ENCODE measurements at regions of chr2 and their contacts with region 1.

Region 1: GRCh38 chr2:218852911-218853667 is 6.5 kb upstream of the WNT6 start:
- DNase-seq: peak; percentile 21 to 60 (median 56)
- ATAC-seq: peak; percentile 87
- H3K4me3 ChIP-seq: no peak overlapping the region
- H3K4me3 Mint-ChIP-seq: no peak overlapping the region
- H3K27ac ChIP-seq: no peak overlapping the region
- H3K27ac Mint-ChIP-seq: peak overlapping the region in 1 of 9 donors; percentile 24
- H3K4me1 ChIP-seq: no peaks in the 10 kb centered on the region
- H3K4me1 Mint-ChIP-seq: peaks cover 0 to 10% (median under 1%) of the 10 kb centered on the region in 7 donors
- H3K27me3 ChIP-seq: peaks cover 9% of the 10 kb centered on the region in 2 donors
- H3K27me3 Mint-ChIP-seq: peaks cover 59 to 71% (median 65%) of the 10 kb centered on the region in 5 donors

Region 2: GRCh38 chr2:218186355-218186766 is 666.7 kb before region 1 on chr2:
- CTCF ChIA-PET with region 1: no interaction called
- POLR2A ChIA-PET with region 1: no interaction called
- intact Hi-C with region 1: loop called in 1 of 2 experiments (anchors 5 kb)
- DNase-seq: peak; percentile 29 to 79 (median 70)
- ATAC-seq: peak; percentile 97
- H3K4me3 ChIP-seq: no peak overlapping the region
- H3K4me3 Mint-ChIP-seq: no peak overlapping the region
- H3K27ac ChIP-seq: no peak overlapping the region
- H3K27ac Mint-ChIP-seq: peak overlapping the region in 1 of 9 donors; percentile 3
- H3K4me1 ChIP-seq: no peaks in the 10 kb centered on the region
- H3K4me1 Mint-ChIP-seq: peaks cover 0 to 14% (median 8%) of the 10 kb centered on the region in 7 donors
- H3K27me3 ChIP-seq: no peaks in the 10 kb centered on the region
- H3K27me3 Mint-ChIP-seq: peaks cover 0 to 24% (median 0%) of the 10 kb centered on the region in 5 donors

Region 3: DNA sequence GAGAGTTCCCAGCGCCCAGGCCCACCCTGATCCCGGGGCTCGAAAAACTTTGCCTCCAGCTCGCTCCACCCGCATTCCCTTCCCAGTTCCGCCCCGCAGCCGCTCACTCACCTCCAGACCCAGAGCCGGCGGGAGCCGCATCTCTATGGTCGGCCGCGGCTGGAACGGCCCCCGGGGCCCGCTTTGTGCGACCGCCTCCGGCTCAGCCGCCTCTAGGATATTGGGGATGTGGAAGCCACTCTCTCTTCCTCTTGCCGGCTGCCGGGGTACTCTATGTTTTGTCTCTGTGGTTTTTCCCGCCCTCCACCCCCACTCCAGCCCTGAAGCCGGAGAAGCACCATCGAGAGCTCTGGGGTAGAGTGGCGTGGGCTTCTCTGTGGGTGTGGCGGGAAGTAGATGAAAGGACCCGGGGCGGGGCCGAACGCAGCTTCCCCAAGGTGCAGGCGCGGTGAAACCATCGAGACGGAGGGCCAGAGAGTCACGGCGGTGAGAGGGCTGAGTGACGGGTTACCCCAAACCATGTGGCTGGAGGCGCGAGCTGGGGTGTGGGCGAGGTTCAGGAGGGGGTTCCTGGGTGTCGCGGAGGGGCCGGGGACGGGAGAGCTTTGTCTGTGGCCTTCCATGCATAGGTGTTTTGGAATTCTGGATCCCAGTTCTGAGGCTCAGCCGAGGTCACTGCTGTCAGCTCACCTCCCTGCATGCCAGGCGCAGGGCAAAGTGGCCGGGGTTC is 193.7 kb before region 1 on chr2 and contains the starts of genes BCS1L and ZNF142:
- CTCF ChIA-PET with region 1: no interaction called
- POLR2A ChIA-PET with region 1: no interaction called
- intact Hi-C with region 1: no loop called
- DNase-seq: peak; percentile 75 to 95 (median 90)
- ATAC-seq: peak; percentile 99
- H3K4me3 ChIP-seq: peak within 1 kb of the TSS; percentile 83
- H3K4me3 Mint-ChIP-seq: peak within 1 kb of the TSS; percentile 90 to 99 (median 98)
- H3K27ac ChIP-seq: peak within 1 kb of the TSS; percentile 80
- H3K27ac Mint-ChIP-seq: peak within 1 kb of the TSS; percentile 74 to 96 (median 93)
- H3K4me1 ChIP-seq: peaks cover 7 to 15% of the 10 kb centered on the region in 2 donors
- H3K4me1 Mint-ChIP-seq: peaks cover 25 to 45% (median 38%) of the 10 kb centered on the region in 7 donors
- H3K27me3 ChIP-seq: no peaks in the 10 kb centered on the region
- H3K27me3 Mint-ChIP-seq: no peaks in the 10 kb centered on the region
- total RNA-seq, gene BCS1L: 21.4 to 62.0 (median 49.0) TPM
- total RNA-seq, gene ZNF142: 38.7 to 49.8 (median 40.8) TPM

Region 4: DNA sequence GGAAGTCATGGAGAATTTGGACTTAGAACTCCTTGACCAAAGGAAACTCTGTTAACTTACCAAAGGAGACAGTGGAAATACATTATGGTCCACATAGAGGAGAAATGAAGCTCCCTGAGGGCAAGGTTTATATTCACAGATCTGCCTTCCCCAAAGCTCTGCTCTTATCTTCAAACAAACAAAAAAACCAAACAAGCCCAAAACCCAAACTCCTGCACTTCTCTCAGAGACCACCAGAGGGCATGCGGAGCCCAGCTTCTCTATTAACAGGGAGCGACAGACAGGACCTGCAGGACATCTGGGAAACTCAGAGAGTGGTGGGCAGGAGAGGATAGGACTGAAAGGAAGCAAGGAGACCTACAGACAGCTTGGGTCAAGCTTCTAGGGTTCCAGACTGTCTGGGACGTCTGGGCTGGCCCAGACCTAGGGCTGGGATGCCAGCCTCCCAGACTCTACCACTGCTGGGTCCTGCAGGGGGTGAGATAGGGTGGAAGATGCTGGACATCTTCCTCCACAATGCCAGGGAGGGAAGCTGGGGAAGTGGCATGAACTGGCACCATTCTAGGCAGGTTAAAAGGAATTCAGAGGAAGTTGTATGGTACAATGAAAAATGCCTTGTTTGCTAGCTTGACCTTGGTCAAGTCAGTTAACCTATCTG is 23.6 kb after region 1 on chr2:
- CTCF ChIA-PET with region 1: interaction called, 6 read pairs
- POLR2A ChIA-PET with region 1: no interaction called
- intact Hi-C with region 1: loop called in 1 of 2 experiments (anchors 1 kb)
- DNase-seq: peak in 8 of 9 donors; percentile 53 to 85 (median 74)
- ATAC-seq: peak; percentile 24
- H3K4me3 ChIP-seq: no peak overlapping the region
- H3K4me3 Mint-ChIP-seq: peak overlapping the region in 3 of 10 donors; percentile 1 to 19 (median 3)
- H3K27ac ChIP-seq: no peak overlapping the region
- H3K27ac Mint-ChIP-seq: peak overlapping the region in 3 of 9 donors; percentile 48 to 53 (median 52)
- H3K4me1 ChIP-seq: peaks cover 26 to 42% of the 10 kb centered on the region in 2 donors
- H3K4me1 Mint-ChIP-seq: peaks cover 24 to 53% (median 43%) of the 10 kb centered on the region in 7 donors
- H3K27me3 ChIP-seq: peaks cover 8 to 18% of the 10 kb centered on the region in 2 donors
- H3K27me3 Mint-ChIP-seq: peaks cover 18 to 77% (median 29%) of the 10 kb centered on the region in 5 donors

Region 5: DNA sequence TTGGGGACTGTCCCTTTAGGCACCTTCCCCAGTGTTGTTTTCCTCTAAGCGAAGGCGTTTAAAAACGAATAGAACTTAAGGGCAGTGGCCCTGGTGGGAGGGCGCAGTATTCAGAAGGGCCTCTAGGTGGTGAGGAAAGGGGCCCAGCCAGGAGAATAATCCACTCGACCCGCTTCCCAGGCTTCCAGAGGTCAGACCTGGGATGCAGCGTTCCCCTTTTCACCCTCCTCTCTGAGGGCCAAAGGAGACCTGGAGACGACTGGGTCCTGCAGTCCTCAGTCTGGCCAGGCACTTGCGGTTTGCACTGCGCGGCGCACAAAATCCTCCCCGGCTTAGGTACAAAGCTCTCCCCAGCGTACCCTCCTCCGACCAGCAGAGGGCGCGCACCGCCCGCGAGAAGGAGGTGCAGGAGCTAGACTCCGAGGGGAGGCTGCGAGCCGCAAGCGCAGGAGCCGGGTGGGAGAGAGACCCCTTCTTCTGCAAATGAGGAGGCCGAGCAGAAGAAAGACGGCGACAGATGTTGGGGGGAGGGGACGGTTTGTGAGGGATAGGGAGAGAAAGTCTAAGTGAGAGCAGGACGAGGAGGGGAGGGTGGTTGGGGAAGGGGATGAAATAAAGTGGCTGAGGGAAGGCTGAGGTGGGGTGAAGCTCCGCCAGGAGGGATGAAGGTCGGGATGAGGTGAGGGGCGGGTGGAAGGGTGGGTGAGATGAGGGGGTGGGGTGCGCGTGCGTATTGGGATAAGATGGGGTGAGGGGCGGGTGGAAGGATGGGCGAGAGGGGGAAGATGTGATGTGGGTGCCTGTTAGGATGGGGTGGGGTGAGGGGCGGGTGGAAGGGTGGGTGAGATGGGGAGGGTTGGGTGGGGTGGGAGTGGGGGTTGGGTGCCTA is 127.0 kb after region 1 on chr2:
- CTCF ChIA-PET with region 1: interaction called, 4 read pairs
- POLR2A ChIA-PET with region 1: no interaction called
- intact Hi-C with region 1: loop called (anchors 1 kb)
- DNase-seq: peak; percentile 65 to 85 (median 81)
- ATAC-seq: peak; percentile 93
- H3K4me3 ChIP-seq: peak overlapping the region; percentile 53
- H3K4me3 Mint-ChIP-seq: peak overlapping the region; percentile 66 to 94 (median 73)
- H3K27ac ChIP-seq: no peak overlapping the region
- H3K27ac Mint-ChIP-seq: peak overlapping the region in 1 of 9 donors; percentile 58
- H3K4me1 ChIP-seq: peaks cover 13 to 23% of the 10 kb centered on the region in 2 donors
- H3K4me1 Mint-ChIP-seq: peaks cover 14 to 40% (median 20%) of the 10 kb centered on the region in 7 donors
- H3K27me3 ChIP-seq: peaks cover 17 to 35% of the 10 kb centered on the region in 2 donors
- H3K27me3 Mint-ChIP-seq: peaks cover 60 to 80% (median 70%) of the 10 kb centered on the region in 5 donors

Region 6: GRCh38 chr2:219029829-219030165 is 176.7 kb after region 1 on chr2:
- CTCF ChIA-PET with region 1: no interaction called
- POLR2A ChIA-PET with region 1: no interaction called
- intact Hi-C with region 1: loop called in 1 of 2 experiments (anchors 1 kb)
- DNase-seq: peak; percentile 60 to 79 (median 71)
- ATAC-seq: peak; percentile 90
- H3K4me3 ChIP-seq: no peak overlapping the region
- H3K4me3 Mint-ChIP-seq: no peak overlapping the region
- H3K27ac ChIP-seq: no peak overlapping the region
- H3K27ac Mint-ChIP-seq: peak overlapping the region in 1 of 9 donors; percentile 14
- H3K4me1 ChIP-seq: no peaks in the 10 kb centered on the region
- H3K4me1 Mint-ChIP-seq: no peaks in the 10 kb centered on the region
- H3K27me3 ChIP-seq: peaks cover 0 to 3% of the 10 kb centered on the region in 2 donors
- H3K27me3 Mint-ChIP-seq: peaks cover 21 to 41% (median 28%) of the 10 kb centered on the region in 5 donors

Region 7: DNA sequence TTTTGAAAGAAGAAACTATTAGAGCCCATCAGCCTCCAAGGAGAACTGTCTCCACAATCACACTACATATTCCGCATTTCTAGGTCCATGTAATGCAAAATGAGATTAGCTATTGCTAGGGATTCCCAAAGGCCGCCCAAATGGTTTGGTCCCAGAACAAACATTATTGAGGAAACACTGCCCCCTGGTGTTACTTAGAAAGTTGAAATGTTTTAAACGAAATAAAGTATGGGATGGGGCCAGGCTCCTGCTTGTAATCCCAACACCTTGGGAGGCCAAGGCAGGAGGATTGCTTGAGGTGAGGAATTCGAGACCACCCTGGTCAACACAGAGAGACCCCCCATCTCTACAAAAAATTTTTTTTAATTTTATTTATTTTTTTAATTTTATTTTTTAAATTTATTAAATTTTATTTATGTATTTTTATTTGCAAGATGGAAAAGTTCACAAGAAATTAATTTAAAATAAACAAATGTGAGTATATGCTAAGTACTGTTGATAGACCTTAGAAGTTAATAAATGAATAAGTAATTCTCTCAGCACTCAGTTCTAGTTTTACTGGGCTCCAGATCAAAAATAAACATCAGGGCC is 302.1 kb after region 1 on chr2:
- CTCF ChIA-PET with region 1: no interaction called
- POLR2A ChIA-PET with region 1: interaction called, 3 read pairs
- intact Hi-C with region 1: loop called in 1 of 2 experiments (anchors 1 kb)
- DNase-seq: peak in 7 of 9 donors; percentile 35 to 58 (median 54)
- ATAC-seq: peak; percentile 53
- H3K4me3 ChIP-seq: no peak overlapping the region
- H3K4me3 Mint-ChIP-seq: no peak overlapping the region
- H3K27ac ChIP-seq: no peak overlapping the region
- H3K27ac Mint-ChIP-seq: no peak overlapping the region
- H3K4me1 ChIP-seq: peaks cover 5 to 6% of the 10 kb centered on the region in 2 donors
- H3K4me1 Mint-ChIP-seq: peaks cover 7 to 21% (median 13%) of the 10 kb centered on the region in 7 donors
- H3K27me3 ChIP-seq: no peaks in the 10 kb centered on the region
- H3K27me3 Mint-ChIP-seq: no peaks in the 10 kb centered on the region

Measured in naive thymus-derived CD4-positive, alpha-beta T cell (primary cell).